ENCODE measurements at regions of chr18 and their contacts with region 1.

Region 1: DNA sequence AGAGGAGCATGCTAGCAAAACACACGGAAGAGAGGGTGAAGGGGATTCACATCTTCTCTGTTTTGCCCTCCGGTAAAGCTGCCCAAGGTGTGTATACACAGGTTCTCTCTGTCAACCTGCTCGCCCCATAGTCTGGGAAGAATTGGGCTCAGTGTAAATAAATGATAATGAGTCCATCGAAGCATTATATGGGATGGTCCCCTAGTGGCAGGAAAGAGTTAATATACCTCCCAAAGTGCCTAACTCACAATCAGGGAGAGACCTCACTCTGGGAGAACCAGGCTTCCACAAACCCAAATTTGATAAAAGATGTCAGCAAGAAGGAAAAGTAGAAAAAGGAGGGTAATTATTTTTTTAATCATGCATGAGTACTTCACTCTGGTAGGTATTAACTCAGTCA is 262.2 kb upstream of the ZNF521 start:
- DNase-seq: no peak
- H3K4me3 Mint-ChIP-seq: no peak overlapping the region
- H3K27ac Mint-ChIP-seq: no peak overlapping the region
- H3K4me1 Mint-ChIP-seq: no peaks in the 10 kb centered on the region
- H3K27me3 Mint-ChIP-seq: no peaks in the 10 kb centered on the region

Region 2: DNA sequence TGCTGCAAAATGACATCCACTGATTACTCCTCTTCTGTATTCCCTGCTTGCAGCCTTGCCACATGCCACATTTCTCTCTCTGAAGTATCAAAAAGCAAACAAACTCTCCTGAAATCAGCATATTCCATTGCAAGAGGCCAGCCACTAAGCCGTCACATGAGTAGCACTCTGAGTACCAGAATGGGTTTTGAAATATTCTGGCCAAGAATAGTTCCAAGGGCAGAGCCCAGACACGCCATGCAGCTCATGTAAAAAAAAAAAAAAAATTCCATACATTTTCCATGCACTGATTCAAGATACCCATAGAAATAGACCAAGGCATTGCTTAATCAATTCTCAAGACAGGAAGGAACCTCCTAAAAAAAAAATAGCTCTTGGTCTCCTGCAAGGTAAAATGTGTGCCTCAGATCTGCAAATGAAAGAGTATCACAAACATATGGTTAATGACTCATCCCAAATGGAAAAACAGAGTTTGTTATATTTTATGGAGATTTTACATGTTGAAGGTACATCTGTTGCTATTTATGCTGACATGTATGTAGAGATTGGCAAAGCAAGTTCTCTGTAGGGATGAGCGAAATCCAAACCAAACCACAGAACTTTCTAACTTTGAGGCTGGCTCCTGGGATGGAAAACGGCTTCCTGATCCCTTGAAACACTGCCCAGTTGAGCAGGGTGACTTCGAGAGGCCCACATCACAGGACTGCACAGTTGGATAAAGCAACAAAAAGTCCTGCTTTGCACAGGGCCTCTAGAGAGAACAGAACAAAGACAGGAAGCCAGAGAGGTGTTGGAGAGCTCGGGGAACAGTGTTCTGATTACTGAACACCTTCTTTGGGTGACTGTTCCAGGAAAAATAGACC is 608.4 kb before region 1 on chr18:
- CTCF ChIA-PET with region 1: no interaction called
- intact Hi-C with region 1: no loop called
- DNase-seq: no peak
- H3K4me3 Mint-ChIP-seq: no peak overlapping the region
- H3K27ac Mint-ChIP-seq: no peak overlapping the region
- H3K4me1 Mint-ChIP-seq: no peaks in the 10 kb centered on the region
- H3K27me3 Mint-ChIP-seq: peaks cover 2% of the 10 kb centered on the region

Region 3: GRCh38 chr18:25058521-25058920 is 555.6 kb before region 1 on chr18:
- CTCF ChIA-PET with region 1: no interaction called
- intact Hi-C with region 1: no loop called
- DNase-seq: no peak
- H3K4me3 Mint-ChIP-seq: no peak overlapping the region
- H3K27ac Mint-ChIP-seq: no peak overlapping the region
- H3K4me1 Mint-ChIP-seq: no peaks in the 10 kb centered on the region
- H3K27me3 Mint-ChIP-seq: no peaks in the 10 kb centered on the region

Region 4: GRCh38 chr18:25669741-25670140 is 55.6 kb after region 1 on chr18:
- CTCF ChIA-PET with region 1: no interaction called
- intact Hi-C with region 1: loop called (anchors 10 kb)
- DNase-seq: no peak
- H3K4me3 Mint-ChIP-seq: no peak overlapping the region
- H3K27ac Mint-ChIP-seq: no peak overlapping the region
- H3K4me1 Mint-ChIP-seq: no peaks in the 10 kb centered on the region
- H3K27me3 Mint-ChIP-seq: no peaks in the 10 kb centered on the region

Region 5: GRCh38 chr18:25927830-25928229 is 313.7 kb after region 1 on chr18:
- CTCF ChIA-PET with region 1: no interaction called
- intact Hi-C with region 1: no loop called
- DNase-seq: no peak
- H3K4me3 Mint-ChIP-seq: no peak overlapping the region
- H3K27ac Mint-ChIP-seq: no peak overlapping the region
- H3K4me1 Mint-ChIP-seq: no peaks in the 10 kb centered on the region
- H3K27me3 Mint-ChIP-seq: no peaks in the 10 kb centered on the region